Common myeloid progenitor, CD34-positive (primary cell): ENCODE measurements at regions of chr6 and their contacts with region 1.

Region 1: GRCh38 chr6:1596088-1596852 is 13.4 kb upstream of the FOXC1 start:
- DNase-seq: peak in 2 of 3 donors; percentile 70 to 74
- H3K4me3 ChIP-seq: peak overlapping the region in 4 of 7 experiments; percentile 10 to 62 (median 38)
- H3K27ac ChIP-seq: no peak overlapping the region
- H3K4me1 ChIP-seq: peaks cover 0 to 7% (median under 1%) of the 10 kb centered on the region in 4 experiments
- H3K27me3 ChIP-seq: peaks cover 6 to 67% (median 22%) of the 10 kb centered on the region in 5 experiments

Region 2: GRCh38 chr6:1584996-1585668 is 11.1 kb before region 1 on chr6:
- CTCF ChIA-PET with region 1: interaction called, 14 read pairs
- POLR2A ChIA-PET with region 1: no interaction called
- DNase-seq: no peak
- H3K4me3 ChIP-seq: no peak overlapping the region
- H3K27ac ChIP-seq: no peak overlapping the region
- H3K4me1 ChIP-seq: no peaks in the 10 kb centered on the region
- H3K27me3 ChIP-seq: peaks cover 0 to 3% (median 0%) of the 10 kb centered on the region in 5 experiments

Region 3: GRCh38 chr6:1609648-1610496 is 13.6 kb after region 1 on chr6 and contains the start of gene FOXC1:
- CTCF ChIA-PET with region 1: interaction called, 15 read pairs
- POLR2A ChIA-PET with region 1: no interaction called
- DNase-seq: peak in 2 of 3 donors; percentile 43 to 46
- H3K4me3 ChIP-seq: peak within 1 kb of the TSS; percentile 16 to 75 (median 55)
- H3K27ac ChIP-seq: no peak within 1 kb of the TSS
- H3K4me1 ChIP-seq: peaks cover 0 to 70% (median 58%) of the 10 kb centered on the region in 4 experiments
- H3K27me3 ChIP-seq: peaks cover 12 to 95% (median 59%) of the 10 kb centered on the region in 5 experiments

Region 4: GRCh38 chr6:1624851-1625781 is 28.8 kb after region 1 on chr6:
- CTCF ChIA-PET with region 1: no interaction called
- POLR2A ChIA-PET with region 1: no interaction called
- DNase-seq: peak in 2 of 3 donors; percentile 71 to 77
- H3K4me3 ChIP-seq: peak overlapping the region; percentile 7 to 81 (median 62)
- H3K27ac ChIP-seq: no peak overlapping the region
- H3K4me1 ChIP-seq: peaks cover 0 to 22% (median 20%) of the 10 kb centered on the region in 4 experiments
- H3K27me3 ChIP-seq: peaks cover 32 to 96% (median 63%) of the 10 kb centered on the region in 5 experiments

Region 5: DNA sequence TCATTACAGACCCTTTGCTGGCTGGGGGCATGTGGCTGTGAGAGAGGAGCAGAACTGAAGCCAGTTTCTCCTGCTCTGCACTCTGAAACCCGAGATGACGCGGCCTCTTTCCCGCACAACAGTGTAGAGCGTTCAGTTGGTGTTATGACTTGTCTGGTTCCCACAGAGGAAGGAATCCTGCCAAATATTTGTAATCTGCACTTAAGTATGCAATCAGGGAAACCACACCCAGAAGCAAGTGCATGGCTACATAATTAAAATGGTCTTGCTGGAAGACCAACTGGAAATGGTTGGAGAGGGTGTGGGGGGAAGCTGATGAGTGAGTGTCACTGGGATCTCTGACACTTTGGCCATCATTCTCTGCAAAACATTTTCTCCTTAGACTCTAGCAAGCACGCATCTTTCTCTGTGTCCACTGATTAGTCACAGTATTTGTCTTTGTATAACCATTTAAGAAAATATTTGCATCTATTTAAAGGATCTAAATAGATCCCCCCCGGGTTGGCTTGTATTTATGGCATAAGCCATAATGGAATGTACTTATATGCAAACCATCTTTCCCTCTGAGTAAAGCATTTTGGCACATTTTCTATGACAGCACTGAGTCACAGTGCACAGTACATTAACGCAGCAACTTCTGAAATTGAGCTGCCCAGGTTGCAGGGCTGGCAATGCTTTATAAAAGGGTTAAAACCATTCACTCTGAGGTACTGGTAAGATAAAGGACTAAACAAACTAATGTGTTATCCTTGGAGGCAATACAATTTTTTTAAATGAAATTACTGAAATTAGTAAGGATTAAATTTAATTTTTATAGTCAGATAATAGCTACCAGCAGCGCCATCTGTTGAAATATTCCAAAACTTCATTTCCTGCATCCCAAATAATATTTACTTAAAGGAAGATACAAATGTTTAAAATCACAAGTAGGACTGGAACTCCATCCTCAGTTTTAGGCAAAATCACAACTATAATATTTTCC is 90.1 kb after region 1 on chr6:
- CTCF ChIA-PET with region 1: no interaction called
- POLR2A ChIA-PET with region 1: no interaction called
- DNase-seq: peak in 2 of 3 donors; percentile 3 to 22
- H3K4me3 ChIP-seq: no peak overlapping the region
- H3K27ac ChIP-seq: no peak overlapping the region
- H3K4me1 ChIP-seq: no peaks in the 10 kb centered on the region
- H3K27me3 ChIP-seq: no peaks in the 10 kb centered on the region

Region 6: GRCh38 chr6:1917626-1918371 is 321.5 kb after region 1 on chr6:
- CTCF ChIA-PET with region 1: no interaction called
- POLR2A ChIA-PET with region 1: no interaction called
- DNase-seq: peak in 2 of 3 donors; percentile 42 to 64
- H3K4me3 ChIP-seq: no peak overlapping the region
- H3K27ac ChIP-seq: no peak overlapping the region
- H3K4me1 ChIP-seq: peaks cover 0 to 20% (median 19%) of the 10 kb centered on the region in 4 experiments
- H3K27me3 ChIP-seq: no peaks in the 10 kb centered on the region

Region 7: GRCh38 chr6:2353412-2354137 is 757.3 kb after region 1 on chr6:
- CTCF ChIA-PET with region 1: interaction called, 18 read pairs
- POLR2A ChIA-PET with region 1: interaction called, 3 read pairs
- DNase-seq: peak; percentile 68 to 85 (median 78)
- H3K4me3 ChIP-seq: no peak overlapping the region
- H3K27ac ChIP-seq: no peak overlapping the region
- H3K4me1 ChIP-seq: peaks cover 0 to 4% (median under 1%) of the 10 kb centered on the region in 4 experiments
- H3K27me3 ChIP-seq: no peaks in the 10 kb centered on the region

Region 8: DNA sequence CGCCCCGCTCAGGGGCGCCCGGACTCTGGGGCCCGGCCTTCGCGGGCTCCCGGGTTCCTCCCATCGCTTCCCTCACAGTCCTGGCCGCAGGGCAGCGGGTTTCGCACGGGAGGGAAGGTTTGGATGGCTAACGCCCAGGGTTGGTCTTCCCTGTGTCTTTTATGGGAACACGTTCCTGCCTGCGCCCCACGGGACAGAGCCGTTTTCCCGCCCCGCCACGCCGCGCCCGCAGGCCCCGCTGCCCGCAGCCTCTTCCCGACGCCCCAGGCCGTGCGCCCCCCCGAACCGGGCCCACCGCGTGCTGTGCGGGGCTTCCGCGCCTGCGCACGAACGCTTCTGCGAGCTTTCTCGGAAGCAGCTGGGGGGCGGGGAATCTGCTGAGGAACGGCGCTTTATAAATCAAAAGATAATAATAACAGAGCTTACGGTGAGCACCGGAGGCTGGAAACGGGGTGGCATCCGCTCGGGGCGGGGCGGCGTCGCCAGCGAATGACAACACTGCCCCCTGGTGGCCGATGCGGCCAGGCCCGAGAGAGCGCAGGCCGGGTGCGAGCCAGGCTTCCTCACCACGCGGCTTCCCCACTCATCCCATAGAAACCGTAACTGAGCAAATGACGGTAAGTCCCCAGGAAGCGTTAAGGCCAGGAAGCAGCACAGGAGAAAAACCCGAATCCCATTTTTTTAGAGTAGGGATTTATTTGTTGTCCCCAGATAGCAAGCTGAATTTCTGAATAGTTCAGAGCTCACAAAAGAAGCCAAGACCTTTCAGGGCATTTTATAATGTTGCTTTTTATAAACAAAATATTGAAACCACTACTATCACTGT is 1038.1 kb after region 1 on chr6:
- CTCF ChIA-PET with region 1: interaction called, 26 read pairs
- POLR2A ChIA-PET with region 1: no interaction called
- DNase-seq: peak; percentile 68 to 87 (median 86)
- H3K4me3 ChIP-seq: peak overlapping the region; percentile 19 to 71 (median 33)
- H3K27ac ChIP-seq: no peak overlapping the region
- H3K4me1 ChIP-seq: peaks cover 3 to 17% (median 15%) of the 10 kb centered on the region in 4 experiments
- H3K27me3 ChIP-seq: peaks cover 0 to 2% (median 0%) of the 10 kb centered on the region in 5 experiments

Region 9: DNA sequence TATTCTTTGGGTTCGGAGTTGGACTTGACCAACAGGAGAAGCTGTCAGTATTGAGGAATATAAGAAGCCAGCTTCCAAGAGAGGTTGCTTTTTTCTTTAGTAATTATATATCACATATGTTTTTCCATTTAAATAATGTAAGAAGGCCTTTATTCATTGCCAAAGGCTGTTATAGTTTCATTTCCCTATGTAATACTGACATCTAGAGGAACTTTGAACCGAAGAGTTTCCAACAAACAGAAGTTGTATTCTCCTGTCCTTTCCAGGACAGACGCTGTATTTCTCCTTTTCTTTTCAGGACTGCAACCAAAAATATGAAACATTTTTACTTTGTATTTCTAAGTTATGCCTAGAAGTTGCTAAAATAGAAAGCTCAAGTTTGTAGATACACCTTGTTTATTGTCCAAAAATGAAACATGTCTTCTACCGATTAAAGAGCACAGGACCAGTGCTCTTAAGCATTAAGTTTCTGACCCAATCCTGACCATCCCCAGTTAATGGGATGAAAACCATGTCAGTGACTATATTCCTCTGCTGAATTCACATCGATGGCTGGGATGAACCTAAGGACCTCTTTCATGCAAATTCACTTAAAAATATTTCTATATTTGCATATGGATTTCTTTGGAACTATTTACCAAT is 1099.3 kb after region 1 on chr6:
- CTCF ChIA-PET with region 1: interaction called, 11 read pairs
- POLR2A ChIA-PET with region 1: no interaction called
- DNase-seq: peak; percentile 50 to 69 (median 61)
- H3K4me3 ChIP-seq: no peak overlapping the region
- H3K27ac ChIP-seq: no peak overlapping the region
- H3K4me1 ChIP-seq: no peaks in the 10 kb centered on the region
- H3K27me3 ChIP-seq: no peaks in the 10 kb centered on the region